HepG2 (cell line): ENCODE measurements at regions of chrX and their contacts with region 1.

Region 1: DNA sequence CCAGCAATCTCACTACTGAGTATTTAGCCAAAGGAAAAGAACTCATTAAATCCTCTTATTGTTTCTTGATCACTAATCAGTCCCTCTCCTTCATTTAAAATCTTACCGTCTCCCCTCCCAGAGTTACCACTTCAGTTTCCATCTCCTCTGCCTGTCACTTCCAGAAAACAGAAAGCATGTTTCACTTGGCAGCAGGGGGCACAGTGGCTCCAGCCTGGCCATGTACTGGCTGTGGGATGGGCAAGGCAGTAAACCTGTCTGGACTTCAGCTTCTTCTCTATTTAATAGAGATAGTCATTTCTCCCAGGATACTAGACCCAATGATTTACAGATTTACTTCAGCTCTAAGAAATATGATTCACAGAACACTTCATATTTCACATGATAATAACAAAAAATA is 63.2 kb downstream of the CD40LG start:
- DNase-seq: no peak
- ATAC-seq: peak; percentile 54; the same call in 2 of the 3 replicates
- H3K4me3 ChIP-seq: no peak overlapping the region
- H3K27ac ChIP-seq: no peak overlapping the region
- H3K4me1 ChIP-seq: no peaks in the 10 kb centered on the region
- H3K27me3 ChIP-seq: no peaks in the 10 kb centered on the region
- CTCF ChIP-seq: peak; percentile 55
- EP300 ChIP-seq: no peak
- POLR2A ChIP-seq: no peak
- RAD21 ChIP-seq: no peak

Region 2: GRCh38 chrX:136909706-136910564 is 198.8 kb after region 1 on chrX:
- CTCF ChIA-PET with region 1: no interaction called
- POLR2A ChIA-PET with region 1: no interaction called
- in situ Hi-C with region 1: loop called (anchors 25 kb)
- intact Hi-C with region 1: no loop called
- DNase-seq: no peak
- ATAC-seq: peak; percentile 55
- H3K4me3 ChIP-seq: peak overlapping the region; percentile 60 to 73 (median 63)
- H3K27ac ChIP-seq: no peak overlapping the region
- H3K4me1 ChIP-seq: no peaks in the 10 kb centered on the region
- H3K27me3 ChIP-seq: no peaks in the 10 kb centered on the region
- CTCF ChIP-seq: no peak
- EP300 ChIP-seq: no peak
- POLR2A ChIP-seq: no peak
- RAD21 ChIP-seq: no peak

Region 3: DNA sequence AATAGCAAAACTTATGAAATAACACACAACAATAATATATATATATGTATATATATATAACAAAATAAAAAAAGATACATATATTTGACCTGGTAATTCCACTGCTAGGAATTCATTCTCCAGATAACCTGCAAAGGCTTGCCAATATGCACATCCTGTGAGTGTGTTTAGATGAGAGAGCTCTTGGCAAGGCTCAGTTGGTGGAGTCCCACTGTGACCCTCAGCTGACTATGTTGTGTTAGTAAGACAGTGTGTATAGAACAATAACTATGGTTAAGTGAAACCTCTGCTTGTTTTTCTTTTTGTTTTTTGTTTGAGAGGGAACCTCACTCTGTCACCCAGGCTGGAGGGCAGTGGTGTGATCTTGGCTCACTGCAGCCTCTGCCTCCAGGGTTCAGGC is 208.9 kb after region 1 on chrX:
- CTCF ChIA-PET with region 1: no interaction called
- POLR2A ChIA-PET with region 1: no interaction called
- in situ Hi-C with region 1: loop called (anchors 25 kb)
- intact Hi-C with region 1: loop called (anchors 1 kb)
- DNase-seq: no peak
- ATAC-seq: no peak
- H3K4me3 ChIP-seq: no peak overlapping the region
- H3K27ac ChIP-seq: no peak overlapping the region
- H3K4me1 ChIP-seq: 0 out of 2 replicates have a peak, but pooled peaks cover 2% of the 10 kb centered on the region
- H3K27me3 ChIP-seq: no peaks in the 10 kb centered on the region
- CTCF ChIP-seq: no peak
- EP300 ChIP-seq: no peak
- POLR2A ChIP-seq: no peak
- RAD21 ChIP-seq: no peak

Region 4: GRCh38 chrX:137051978-137052642 is 341.0 kb after region 1 on chrX:
- CTCF ChIA-PET with region 1: no interaction called
- POLR2A ChIA-PET with region 1: no interaction called
- in situ Hi-C with region 1: no loop called
- intact Hi-C with region 1: loop called (anchors 5 kb)
- DNase-seq: peak; percentile 21
- ATAC-seq: peak; percentile 98
- H3K4me3 ChIP-seq: peak overlapping the region in 1 of 3 experiments; percentile 43; a peak in 1 of 6 replicates
- H3K27ac ChIP-seq: no peak overlapping the region
- H3K4me1 ChIP-seq: no peaks in the 10 kb centered on the region
- H3K27me3 ChIP-seq: peaks cover 1 to 17% of the 10 kb centered on the region in 2 experiments; a peak in 3 of 5 replicates
- CTCF ChIP-seq: peak; percentile 85
- EP300 ChIP-seq: no peak
- POLR2A ChIP-seq: no peak
- RAD21 ChIP-seq: peak; percentile 64